Naive thymus-derived CD4-positive, alpha-beta T cell (primary cell): ENCODE measurements at regions of chr21 and their contacts with region 1.

Region 1: GRCh38 chr21:42496122-42496900 is at the start of gene RSPH1:
- DNase-seq: peak; percentile 96 to 99 (median 99)
- ATAC-seq: peak; percentile 98
- H3K4me3 ChIP-seq: peak within 1 kb of the TSS; percentile 91
- H3K4me3 Mint-ChIP-seq: peak within 1 kb of the TSS; percentile 85 to 96 (median 92)
- H3K27ac ChIP-seq: peak within 1 kb of the TSS; percentile 93
- H3K27ac Mint-ChIP-seq: peak within 1 kb of the TSS; percentile 18 to 98 (median 92)
- H3K4me1 ChIP-seq: peaks cover 11 to 15% of the 10 kb centered on the region in 2 donors
- H3K4me1 Mint-ChIP-seq: peaks cover 11 to 30% (median 26%) of the 10 kb centered on the region in 7 donors
- H3K27me3 ChIP-seq: no peaks in the 10 kb centered on the region
- H3K27me3 Mint-ChIP-seq: peaks cover 0 to 26% (median 0%) of the 10 kb centered on the region in 5 donors
- total RNA-seq, gene RSPH1: 0.27 to 0.40 TPM in 2 of 5 experiments, not detected in the others

Region 2: DNA sequence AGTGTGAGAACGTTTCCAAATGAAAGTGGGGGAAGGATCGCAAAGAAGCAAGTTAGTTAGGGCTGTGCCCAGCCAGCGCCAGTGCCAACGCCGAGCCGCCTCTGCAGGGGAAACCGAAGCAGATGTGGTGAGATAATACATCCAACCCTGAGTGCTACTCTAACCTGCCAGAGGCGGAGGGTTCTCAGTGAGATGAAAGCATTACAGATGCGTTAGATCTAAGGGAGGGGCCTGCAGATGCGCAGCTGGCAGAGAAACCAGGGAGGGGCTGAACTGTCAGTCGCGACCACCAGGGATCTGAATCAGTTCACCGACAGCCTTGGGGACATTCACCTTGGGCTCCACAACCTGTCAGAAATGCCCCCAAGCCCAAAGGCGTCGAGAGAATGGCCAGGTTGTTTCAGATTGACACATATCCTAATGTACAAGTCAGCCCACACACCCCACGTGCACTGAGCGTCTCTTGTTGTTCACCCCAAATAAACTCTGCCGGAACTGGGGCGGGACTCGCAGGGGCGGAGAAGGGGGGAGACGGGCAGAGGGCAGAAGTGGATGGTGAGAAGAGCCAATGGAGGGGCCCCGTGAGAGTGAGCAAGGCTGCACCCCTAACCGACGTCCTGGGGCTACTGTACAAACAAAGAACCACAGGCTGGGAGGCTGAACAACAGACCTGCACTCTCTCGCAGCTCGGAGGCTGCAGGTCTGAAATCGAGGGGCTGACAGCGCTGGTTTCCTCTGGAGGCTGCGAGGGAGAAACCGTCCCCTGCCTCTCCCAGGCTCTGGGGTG is 433.9 kb before region 1 on chr21:
- CTCF ChIA-PET with region 1: no interaction called
- POLR2A ChIA-PET with region 1: no interaction called
- intact Hi-C with region 1: loop called in 1 of 2 experiments (anchors 1 kb)
- DNase-seq: peak; percentile 63 to 99 (median 97)
- ATAC-seq: peak; percentile 91
- H3K4me3 ChIP-seq: peak overlapping the region; percentile 64
- H3K4me3 Mint-ChIP-seq: peak overlapping the region; percentile 85 to 95 (median 92)
- H3K27ac ChIP-seq: peak overlapping the region; percentile 85
- H3K27ac Mint-ChIP-seq: peak overlapping the region; percentile 94 to 100 (median 99)
- H3K4me1 ChIP-seq: peaks cover 20 to 32% of the 10 kb centered on the region in 2 donors
- H3K4me1 Mint-ChIP-seq: peaks cover 28 to 76% (median 55%) of the 10 kb centered on the region in 7 donors
- H3K27me3 ChIP-seq: no peaks in the 10 kb centered on the region
- H3K27me3 Mint-ChIP-seq: peaks cover 0 to 5% (median 0%) of the 10 kb centered on the region in 5 donors

Region 3: GRCh38 chr21:42389449-42389835 is 106.9 kb before region 1 on chr21:
- CTCF ChIA-PET with region 1: no interaction called
- POLR2A ChIA-PET with region 1: no interaction called
- intact Hi-C with region 1: no loop called
- DNase-seq: no peak
- ATAC-seq: no peak
- H3K4me3 ChIP-seq: no peak overlapping the region
- H3K4me3 Mint-ChIP-seq: peak overlapping the region in 2 of 10 donors; percentile 4 to 53
- H3K27ac ChIP-seq: no peak overlapping the region
- H3K27ac Mint-ChIP-seq: peak overlapping the region in 3 of 9 donors; percentile 39 to 85 (median 56)
- H3K4me1 ChIP-seq: peaks cover 13 to 37% of the 10 kb centered on the region in 2 donors
- H3K4me1 Mint-ChIP-seq: peaks cover 23 to 92% (median 73%) of the 10 kb centered on the region in 7 donors
- H3K27me3 ChIP-seq: no peaks in the 10 kb centered on the region
- H3K27me3 Mint-ChIP-seq: peaks cover 0 to 4% (median 0%) of the 10 kb centered on the region in 5 donors

Region 4: DNA sequence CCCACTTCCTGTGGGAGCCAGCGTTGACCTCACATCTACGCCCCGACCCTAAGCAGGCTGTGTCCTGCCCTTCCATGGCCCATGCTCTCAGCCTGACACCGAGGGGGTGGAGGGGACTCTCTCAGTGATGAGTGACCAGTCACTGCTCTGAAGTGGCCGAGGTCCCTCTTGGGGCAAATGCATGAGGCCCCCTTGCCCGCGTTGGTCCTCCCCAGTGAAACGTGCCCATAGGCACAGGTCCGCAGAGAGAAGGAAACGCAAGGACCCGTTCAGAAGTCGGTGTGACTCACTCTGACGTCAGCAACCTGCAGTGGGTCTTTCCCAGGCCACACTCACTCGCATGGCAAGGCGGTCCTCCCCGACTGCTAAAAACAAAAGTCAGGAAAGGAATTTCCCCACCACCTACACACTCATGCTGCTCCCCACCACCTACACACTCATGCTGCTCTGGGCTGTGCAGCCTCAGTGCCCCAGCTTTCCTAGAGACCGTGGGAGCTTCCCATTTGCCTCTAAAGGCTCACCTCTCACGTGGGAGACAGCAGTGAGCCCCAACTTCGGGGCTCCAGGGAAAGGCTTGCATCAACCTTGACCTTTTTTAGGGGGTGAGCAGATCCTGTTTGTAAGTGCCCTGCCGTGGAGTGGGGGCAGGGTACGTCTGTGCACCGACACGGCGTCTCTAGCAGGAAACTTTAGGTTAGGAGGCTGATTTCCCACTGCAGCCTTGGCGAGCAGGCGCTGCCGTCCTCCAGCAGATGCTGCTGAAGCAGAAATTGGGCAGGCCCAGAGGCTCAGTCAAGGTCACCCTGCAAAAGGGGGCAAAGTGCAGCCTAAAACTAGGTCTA is 81.2 kb before region 1 on chr21:
- CTCF ChIA-PET with region 1: no interaction called
- POLR2A ChIA-PET with region 1: no interaction called
- intact Hi-C with region 1: loop called in 1 of 2 experiments (anchors 5 kb)
- DNase-seq: peak; percentile 48 to 96 (median 80)
- ATAC-seq: peak; percentile 96
- H3K4me3 ChIP-seq: peak overlapping the region; percentile 49
- H3K4me3 Mint-ChIP-seq: peak overlapping the region; percentile 65 to 85 (median 75)
- H3K27ac ChIP-seq: peak overlapping the region; percentile 92
- H3K27ac Mint-ChIP-seq: peak overlapping the region in 8 of 9 donors; percentile 88 to 99 (median 97)
- H3K4me1 ChIP-seq: peaks cover 59 to 77% of the 10 kb centered on the region in 2 donors
- H3K4me1 Mint-ChIP-seq: peaks cover 23 to 75% (median 69%) of the 10 kb centered on the region in 7 donors
- H3K27me3 ChIP-seq: no peaks in the 10 kb centered on the region
- H3K27me3 Mint-ChIP-seq: no peaks in the 10 kb centered on the region

Region 5: DNA sequence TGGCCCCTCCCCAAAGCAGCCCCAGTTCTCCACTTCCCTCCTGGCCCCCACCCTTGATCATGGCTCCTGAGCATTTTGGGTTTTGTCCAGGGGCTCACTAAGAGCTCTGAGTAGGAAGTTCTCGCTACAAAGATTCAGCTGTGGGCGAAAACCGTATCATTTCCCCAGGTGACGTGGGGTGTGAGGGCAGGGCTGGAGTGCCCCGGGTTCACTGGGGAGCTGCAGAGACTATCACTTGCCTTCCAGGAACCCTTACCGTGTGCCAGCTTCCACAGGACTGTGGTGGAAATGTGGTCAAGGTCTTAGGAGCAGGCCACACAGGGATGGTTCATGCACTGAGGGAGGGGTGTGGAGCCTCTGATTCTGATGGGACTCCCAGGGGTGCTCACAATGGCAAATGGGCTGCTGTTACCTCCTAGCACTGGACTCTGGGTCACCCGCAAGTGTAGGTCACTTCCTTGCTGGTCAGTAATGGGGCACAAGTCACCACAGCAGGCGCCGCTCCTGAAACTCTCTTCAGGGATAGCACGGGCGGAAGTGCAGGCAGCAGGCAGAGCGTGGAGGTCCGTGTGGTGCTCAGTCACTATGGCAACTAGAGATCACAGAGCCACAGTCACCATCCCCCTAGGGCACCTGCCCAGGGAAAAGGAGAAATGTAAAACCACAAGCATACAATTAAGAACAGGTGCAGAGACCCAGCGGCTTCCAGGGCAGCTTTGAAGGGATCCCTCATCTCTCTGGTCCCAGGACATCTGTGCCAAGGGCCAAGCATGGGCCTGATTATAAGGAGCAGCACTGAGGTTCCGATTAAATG is 35.7 kb before region 1 on chr21:
- CTCF ChIA-PET with region 1: no interaction called
- POLR2A ChIA-PET with region 1: no interaction called
- intact Hi-C with region 1: loop called (anchors 1 kb)
- DNase-seq: peak in 8 of 9 donors; percentile 31 to 84 (median 80)
- ATAC-seq: peak; percentile 81
- H3K4me3 ChIP-seq: peak overlapping the region; percentile 30
- H3K4me3 Mint-ChIP-seq: peak overlapping the region in 9 of 10 donors; percentile 58 to 85 (median 78)
- H3K27ac ChIP-seq: peak overlapping the region; percentile 73
- H3K27ac Mint-ChIP-seq: peak overlapping the region; percentile 59 to 99 (median 96)
- H3K4me1 ChIP-seq: peaks cover 18 to 61% of the 10 kb centered on the region in 2 donors
- H3K4me1 Mint-ChIP-seq: peaks cover 54 to 81% (median 79%) of the 10 kb centered on the region in 7 donors
- H3K27me3 ChIP-seq: no peaks in the 10 kb centered on the region
- H3K27me3 Mint-ChIP-seq: no peaks in the 10 kb centered on the region

Region 6: GRCh38 chr21:42478504-42478903 is 17.8 kb before region 1 on chr21:
- CTCF ChIA-PET with region 1: no interaction called
- POLR2A ChIA-PET with region 1: no interaction called
- intact Hi-C with region 1: no loop called
- DNase-seq: no peak
- ATAC-seq: no peak
- H3K4me3 ChIP-seq: no peak overlapping the region
- H3K4me3 Mint-ChIP-seq: no peak overlapping the region
- H3K27ac ChIP-seq: no peak overlapping the region
- H3K27ac Mint-ChIP-seq: peak overlapping the region in 1 of 9 donors; percentile 8
- H3K4me1 ChIP-seq: no peaks in the 10 kb centered on the region
- H3K4me1 Mint-ChIP-seq: peaks cover 0 to 8% (median 0%) of the 10 kb centered on the region in 7 donors
- H3K27me3 ChIP-seq: no peaks in the 10 kb centered on the region
- H3K27me3 Mint-ChIP-seq: peaks cover 0 to 13% (median 0%) of the 10 kb centered on the region in 5 donors

Region 7: DNA sequence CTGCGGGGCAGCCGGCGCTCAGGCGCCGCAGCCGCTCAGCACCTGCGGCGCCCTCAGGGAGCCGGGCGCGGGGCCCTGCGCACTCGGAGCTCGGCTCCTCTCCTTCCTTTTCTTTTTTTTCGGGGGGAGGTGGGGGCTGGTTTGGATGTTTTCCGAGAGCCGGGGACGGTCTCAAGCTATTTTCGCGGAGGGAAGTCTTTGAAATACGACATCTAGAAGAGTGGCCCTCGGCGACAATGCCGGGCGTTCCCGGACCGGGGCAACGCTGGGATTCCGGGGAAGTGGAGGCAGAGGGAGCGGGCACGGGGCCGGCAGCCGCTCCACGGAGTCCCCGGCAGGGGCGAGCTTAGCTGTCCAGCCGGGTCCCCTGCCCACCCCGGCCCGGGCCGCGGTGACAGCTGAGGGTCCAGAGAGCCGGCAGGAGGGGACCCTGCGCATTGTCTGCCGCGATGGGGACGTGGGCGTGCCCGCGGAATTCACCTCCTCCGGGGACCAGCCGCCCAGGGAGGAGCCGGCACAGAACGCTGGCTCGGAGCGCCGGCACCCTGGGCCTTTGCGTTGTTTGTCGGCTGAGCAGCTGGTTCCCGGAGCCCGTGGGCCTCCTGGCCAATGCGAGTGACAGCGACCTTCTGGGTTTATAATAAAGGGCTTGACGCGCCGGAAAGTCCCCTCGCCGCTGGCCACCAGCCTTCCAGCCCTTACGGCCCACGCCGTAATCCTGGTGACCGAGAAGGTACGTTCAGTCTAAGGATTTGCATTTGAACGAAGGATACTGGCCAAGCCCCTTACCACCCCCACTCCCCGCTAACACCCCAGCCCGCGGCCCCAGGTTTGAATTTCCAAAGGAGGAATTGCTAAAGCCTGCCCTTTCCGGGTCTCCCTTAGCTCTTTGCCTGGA is 17.9 kb after region 1 on chr21:
- CTCF ChIA-PET with region 1: interaction called, 3 read pairs
- POLR2A ChIA-PET with region 1: interaction called, 4 read pairs
- intact Hi-C with region 1: loop called (anchors 1 kb)
- DNase-seq: peak in 8 of 9 donors; percentile 42 to 76 (median 54)
- ATAC-seq: peak; percentile 83
- H3K4me3 ChIP-seq: peak overlapping the region; percentile 82
- H3K4me3 Mint-ChIP-seq: peak overlapping the region; percentile 76 to 97 (median 89)
- H3K27ac ChIP-seq: peak overlapping the region; percentile 87
- H3K27ac Mint-ChIP-seq: peak overlapping the region; percentile 58 to 88 (median 84)
- H3K4me1 ChIP-seq: peaks cover 18 to 20% of the 10 kb centered on the region in 2 donors
- H3K4me1 Mint-ChIP-seq: peaks cover 22 to 45% (median 38%) of the 10 kb centered on the region in 7 donors
- H3K27me3 ChIP-seq: no peaks in the 10 kb centered on the region
- H3K27me3 Mint-ChIP-seq: peaks cover 0 to 19% (median 0%) of the 10 kb centered on the region in 5 donors

Region 8: DNA sequence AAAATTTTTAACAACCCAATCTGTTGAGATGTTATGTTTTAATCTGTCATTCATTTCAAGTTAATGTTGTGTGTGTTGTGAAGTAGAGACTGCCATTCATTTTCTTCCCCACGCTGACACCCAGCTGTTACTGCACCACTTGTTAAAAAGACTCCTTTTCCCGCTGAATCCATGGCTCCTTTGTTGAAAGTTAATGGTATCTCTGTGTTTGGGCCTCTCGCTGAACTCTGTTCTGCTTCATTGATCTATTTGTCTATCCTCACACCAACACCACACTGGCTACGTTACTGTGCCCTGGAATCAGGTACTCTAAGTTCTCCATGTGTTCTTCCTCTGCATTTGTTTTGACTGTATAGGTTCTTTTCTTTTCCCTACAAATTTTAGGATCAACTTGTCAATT is 215.4 kb after region 1 on chr21:
- CTCF ChIA-PET with region 1: no interaction called
- POLR2A ChIA-PET with region 1: no interaction called
- intact Hi-C with region 1: no loop called
- DNase-seq: no peak
- ATAC-seq: no peak
- H3K4me3 ChIP-seq: no peak overlapping the region
- H3K4me3 Mint-ChIP-seq: no peak overlapping the region
- H3K27ac ChIP-seq: no peak overlapping the region
- H3K27ac Mint-ChIP-seq: peak overlapping the region in 2 of 9 donors; percentile 11 to 82
- H3K4me1 ChIP-seq: no peaks in the 10 kb centered on the region
- H3K4me1 Mint-ChIP-seq: peaks cover 0 to 4% (median 0%) of the 10 kb centered on the region in 7 donors
- H3K27me3 ChIP-seq: no peaks in the 10 kb centered on the region
- H3K27me3 Mint-ChIP-seq: no peaks in the 10 kb centered on the region

Region 9: DNA sequence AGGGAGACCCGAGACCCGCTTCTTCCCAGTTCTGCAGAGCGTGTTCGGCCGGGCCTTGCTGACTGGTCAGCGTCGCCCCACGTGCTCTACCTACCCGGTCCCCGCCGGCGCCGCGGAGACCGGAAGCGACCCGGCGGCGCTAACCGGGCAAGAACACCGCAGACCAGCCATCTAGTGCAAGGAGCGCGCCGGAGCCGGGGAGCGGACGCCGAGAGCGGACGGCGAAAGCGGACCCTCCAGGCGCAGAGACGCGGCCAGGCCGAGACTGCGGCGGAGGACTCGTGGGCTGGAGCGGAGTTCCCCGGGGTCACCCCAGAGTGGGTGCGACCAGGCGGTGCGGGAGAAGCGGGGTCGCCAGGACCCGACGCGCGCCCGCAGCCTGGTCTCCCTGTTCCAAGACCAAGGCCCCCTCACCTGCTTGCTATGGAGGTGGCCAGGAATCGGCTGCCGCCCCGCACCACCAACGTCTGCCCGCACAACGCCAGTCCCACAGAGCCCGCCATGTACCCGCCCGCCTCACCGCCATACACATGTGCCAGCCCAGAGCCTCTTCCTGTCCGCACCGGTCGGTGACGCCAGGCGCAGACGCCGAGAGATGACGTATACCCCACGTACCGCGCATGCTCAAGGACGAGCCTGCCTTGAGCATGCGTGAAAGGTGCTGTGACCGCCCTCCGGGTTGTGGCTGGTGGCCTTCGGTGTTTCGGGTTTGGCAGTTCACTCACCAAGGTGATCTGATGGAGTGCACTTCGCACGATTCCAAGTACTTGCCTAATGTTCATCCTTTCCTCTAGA is 382.9 kb after region 1 on chr21 and contains the start of gene WDR4:
- CTCF ChIA-PET with region 1: no interaction called
- POLR2A ChIA-PET with region 1: no interaction called
- intact Hi-C with region 1: loop called in 1 of 2 experiments (anchors 1 kb)
- DNase-seq: peak; percentile 97 to 100 (median 99)
- ATAC-seq: peak; percentile 97
- H3K4me3 ChIP-seq: peak within 1 kb of the TSS; percentile 66
- H3K4me3 Mint-ChIP-seq: peak within 1 kb of the TSS; percentile 93 to 99 (median 97)
- H3K27ac ChIP-seq: peak within 1 kb of the TSS; percentile 85
- H3K27ac Mint-ChIP-seq: peak within 1 kb of the TSS; percentile 94 to 100 (median 98)
- H3K4me1 ChIP-seq: peaks cover 12 to 15% of the 10 kb centered on the region in 2 donors
- H3K4me1 Mint-ChIP-seq: peaks cover 17 to 41% (median 29%) of the 10 kb centered on the region in 7 donors
- H3K27me3 ChIP-seq: no peaks in the 10 kb centered on the region
- H3K27me3 Mint-ChIP-seq: peaks cover 0 to 6% (median 0%) of the 10 kb centered on the region in 5 donors
- total RNA-seq, gene WDR4: 24.4 to 39.1 (median 30.5) TPM

Region 10: GRCh38 chr21:43667191-43667904 is 1171.0 kb after region 1 on chr21:
- CTCF ChIA-PET with region 1: no interaction called
- POLR2A ChIA-PET with region 1: no interaction called
- intact Hi-C with region 1: loop called in 1 of 2 experiments (anchors 5 kb)
- DNase-seq: no peak
- ATAC-seq: no peak
- H3K4me3 ChIP-seq: no peak overlapping the region
- H3K4me3 Mint-ChIP-seq: peak overlapping the region in 6 of 10 donors; percentile 2 to 54 (median 28)
- H3K27ac ChIP-seq: no peak overlapping the region
- H3K27ac Mint-ChIP-seq: peak overlapping the region in 2 of 9 donors; percentile 30 to 59
- H3K4me1 ChIP-seq: peaks cover 0 to 4% of the 10 kb centered on the region in 2 donors
- H3K4me1 Mint-ChIP-seq: peaks cover 34 to 63% (median 46%) of the 10 kb centered on the region in 7 donors
- H3K27me3 ChIP-seq: no peaks in the 10 kb centered on the region
- H3K27me3 Mint-ChIP-seq: no peaks in the 10 kb centered on the region